Adrenal gland (tissue), 19 donors: ENCODE measurements at regions of chr17 and their contacts with region 1.

Region 1: DNA sequence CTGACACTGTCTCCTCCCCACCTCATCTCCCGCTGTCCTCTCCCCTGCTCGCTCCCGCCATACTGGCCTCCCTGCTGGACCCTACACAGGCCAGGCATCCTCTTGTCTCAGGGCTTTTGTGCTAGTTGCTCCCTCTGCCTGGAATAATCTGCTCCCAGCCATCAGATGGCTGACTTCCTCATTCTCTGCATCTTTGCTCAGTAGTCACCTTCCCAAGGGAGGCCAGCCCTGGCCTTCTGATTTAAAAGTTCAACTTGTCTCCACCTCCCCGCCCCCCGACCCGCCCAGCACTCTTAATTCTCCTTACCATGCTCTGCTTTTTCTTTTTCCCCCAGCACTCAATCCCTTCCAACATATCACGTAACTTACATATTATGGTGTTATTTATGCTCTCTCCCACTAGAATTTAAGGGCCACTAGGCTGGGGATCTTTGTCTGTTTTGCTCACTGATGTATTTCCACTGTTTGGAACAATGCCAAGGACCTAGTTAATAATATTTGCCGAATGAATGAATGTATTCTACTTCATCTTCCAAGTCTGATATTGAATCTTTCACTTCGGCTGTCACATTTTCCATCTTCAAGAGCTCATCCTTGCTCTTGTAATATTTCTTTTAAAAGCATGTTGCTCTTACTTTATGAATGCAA is 178.3 kb downstream of the CDK5R1 start:
- DNase-seq: no peak
- H3K4me3 ChIP-seq: no peak overlapping the region
- H3K27ac ChIP-seq: no peak overlapping the region
- H3K4me1 ChIP-seq: no peaks in the 10 kb centered on the region
- H3K27me3 ChIP-seq: no peaks in the 10 kb centered on the region
- CTCF ChIP-seq: no peak
- POLR2A ChIP-seq: no peak

Region 2: DNA sequence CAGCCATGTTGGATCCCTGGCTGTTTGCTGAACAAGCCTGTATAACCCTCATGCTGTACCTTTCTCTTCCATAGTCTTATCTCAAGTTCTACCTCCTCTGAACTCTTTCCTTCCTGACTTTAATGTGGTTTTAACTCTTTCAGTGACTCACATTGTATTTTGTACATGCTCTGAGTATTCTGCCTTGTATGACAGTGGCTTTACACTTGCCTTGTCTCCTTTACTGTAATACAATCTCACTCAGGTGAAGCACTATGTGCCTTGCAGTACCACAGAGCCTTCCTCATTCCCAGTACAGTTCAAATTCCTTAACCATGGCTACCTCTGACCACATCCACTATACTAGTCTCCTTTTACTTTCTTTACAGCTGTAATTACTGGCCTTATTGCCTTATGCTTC is 206.7 kb before region 1 on chr17:
- intact Hi-C with region 1: no loop called
- DNase-seq: no peak
- H3K4me3 ChIP-seq: no peak overlapping the region
- H3K27ac ChIP-seq: no peak overlapping the region
- H3K4me1 ChIP-seq: peaks cover 0 to 7% of the 10 kb centered on the region in 2 donors
- H3K27me3 ChIP-seq: no peaks in the 10 kb centered on the region
- CTCF ChIP-seq: no peak
- POLR2A ChIP-seq: no peak

Region 3: DNA sequence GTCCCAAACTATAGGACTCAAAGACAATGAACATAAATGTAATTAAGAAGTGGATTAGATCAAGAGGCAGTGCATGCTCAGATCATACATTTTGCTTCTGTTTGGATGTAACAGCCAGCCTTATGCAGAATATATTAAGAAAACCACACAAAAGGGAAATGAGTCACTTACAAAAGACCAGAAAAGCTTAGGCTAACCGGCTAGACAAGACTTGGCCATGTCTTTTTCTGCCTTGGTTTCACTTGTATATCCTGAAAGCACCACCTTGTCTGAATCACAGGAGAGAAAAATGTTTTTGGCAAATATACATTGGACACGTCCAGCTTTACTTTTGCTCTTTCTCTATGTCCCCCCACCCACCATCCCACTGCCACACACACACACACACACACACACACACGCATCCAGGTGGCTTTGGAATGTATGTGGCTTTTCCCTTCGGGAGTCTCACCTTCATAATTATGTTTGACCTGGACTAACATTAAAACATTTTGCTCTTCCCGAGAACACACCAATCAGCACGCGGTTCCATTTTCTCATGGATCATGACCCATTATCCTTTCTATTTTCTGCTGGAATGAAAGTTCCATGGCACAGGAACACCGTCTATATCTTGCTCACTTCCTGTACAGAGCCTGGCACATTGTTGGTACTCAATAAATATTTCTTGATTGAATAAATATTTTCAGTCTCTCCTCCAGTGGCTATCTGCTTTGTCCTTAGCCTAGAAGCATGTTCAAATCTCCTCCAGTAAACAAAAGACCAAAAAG is 113.7 kb before region 1 on chr17:
- intact Hi-C with region 1: no loop called
- DNase-seq: no peak
- H3K4me3 ChIP-seq: no peak overlapping the region
- H3K27ac ChIP-seq: no peak overlapping the region
- H3K4me1 ChIP-seq: no peaks in the 10 kb centered on the region
- H3K27me3 ChIP-seq: no peaks in the 10 kb centered on the region
- CTCF ChIP-seq: no peak
- POLR2A ChIP-seq: no peak

Region 4: DNA sequence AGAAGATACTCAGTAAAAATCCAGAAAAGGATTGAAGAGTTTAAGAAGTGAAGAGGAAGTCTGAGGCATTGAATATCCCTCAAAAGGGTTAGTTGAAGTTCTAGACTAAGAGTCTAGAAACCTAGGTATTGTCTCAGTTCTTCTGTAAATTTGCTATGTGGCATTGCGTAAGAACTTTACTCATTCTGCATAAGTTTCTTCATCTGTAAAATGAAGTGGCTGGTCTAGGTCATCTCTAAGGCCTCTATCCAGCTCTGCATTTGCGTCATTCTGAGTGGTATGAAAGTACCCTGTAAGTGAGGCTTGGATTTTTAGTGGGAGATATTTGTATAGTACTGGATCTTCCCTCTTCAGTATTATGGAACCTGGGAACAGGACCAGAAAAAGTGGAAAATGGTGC is 81.6 kb after region 1 on chr17:
- intact Hi-C with region 1: loop called in 1 of 2 experiments (anchors 10 kb)
- DNase-seq: no peak
- H3K4me3 ChIP-seq: no peak overlapping the region
- H3K27ac ChIP-seq: no peak overlapping the region
- H3K4me1 ChIP-seq: peaks cover 0 to 11% of the 10 kb centered on the region in 2 donors
- H3K27me3 ChIP-seq: no peaks in the 10 kb centered on the region
- CTCF ChIP-seq: no peak
- POLR2A ChIP-seq: no peak

Region 5: GRCh38 chr17:32835291-32835761 is 170.3 kb after region 1 on chr17:
- intact Hi-C with region 1: no loop called
- DNase-seq: no peak
- H3K4me3 ChIP-seq: no peak overlapping the region
- H3K27ac ChIP-seq: no peak overlapping the region
- H3K4me1 ChIP-seq: no peaks in the 10 kb centered on the region
- H3K27me3 ChIP-seq: no peaks in the 10 kb centered on the region
- CTCF ChIP-seq: no peak
- POLR2A ChIP-seq: no peak

Region 6: GRCh38 chr17:33292184-33292980 is 627.3 kb after region 1 on chr17:
- intact Hi-C with region 1: no loop called
- DNase-seq: peak in 1 of 7 donors; percentile 26
- H3K4me3 ChIP-seq: peak overlapping the region in 2 of 4 donors; percentile 9 to 22
- H3K27ac ChIP-seq: no peak overlapping the region
- H3K4me1 ChIP-seq: peaks cover 7 to 9% of the 10 kb centered on the region in 2 donors
- H3K27me3 ChIP-seq: peaks cover 23% of the 10 kb centered on the region
- CTCF ChIP-seq: peak in 3 of 6 experiments; percentile 15 to 44 (median 18)
- POLR2A ChIP-seq: no peak